ENCODE measurements at regions of chr2 and their contacts with region 1.

Region 1: DNA sequence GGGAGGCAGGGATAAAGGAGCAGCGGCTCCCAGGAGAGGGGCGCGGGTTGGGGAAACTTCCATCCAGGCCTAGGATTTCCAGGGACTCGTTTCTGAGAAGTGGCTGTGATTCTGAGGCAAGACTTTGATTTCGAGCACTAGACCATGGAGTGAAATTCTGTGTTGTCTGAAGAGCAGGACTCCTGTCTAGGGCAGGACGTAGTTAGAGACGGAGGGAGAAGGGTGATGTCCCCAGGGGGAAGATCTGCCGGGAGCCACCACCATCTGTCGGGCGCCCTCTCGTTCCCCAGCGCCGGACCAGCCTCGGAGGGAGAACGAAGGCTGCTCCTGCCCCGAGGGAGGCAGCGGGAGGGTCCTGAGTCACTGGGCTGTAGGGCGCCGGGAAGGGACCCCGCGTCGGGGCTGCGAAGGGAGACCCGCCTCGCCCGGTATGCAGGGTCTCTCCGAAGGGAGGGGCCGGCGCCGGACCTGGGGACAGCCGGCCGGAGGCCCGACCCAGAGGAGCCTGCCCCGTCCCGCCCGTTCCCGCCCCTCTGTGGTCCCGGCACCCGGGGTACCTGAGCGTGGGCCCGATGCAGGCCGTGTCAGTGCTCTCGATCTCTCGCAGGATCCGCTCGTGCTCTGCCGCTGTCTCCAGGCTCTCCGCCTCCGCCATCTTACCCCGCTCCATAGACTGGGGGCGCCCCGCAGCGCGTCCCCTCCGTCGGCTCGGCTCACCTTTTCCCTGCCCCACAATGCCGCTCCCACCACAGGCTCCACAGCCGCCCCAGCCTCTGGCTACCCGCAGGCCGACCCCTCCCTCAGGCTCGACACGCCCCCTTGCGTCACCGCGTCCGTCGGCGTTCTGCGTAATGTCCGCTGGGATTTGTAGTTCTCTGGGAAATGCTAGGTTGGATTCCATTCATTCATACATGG is at the start of gene EXOC6B:
- DNase-seq: peak; percentile 95
- H3K4me3 ChIP-seq: peak within 1 kb of the TSS; percentile 40 to 97 (median 75)
- H3K27ac ChIP-seq: peak within 1 kb of the TSS; percentile 58
- H3K4me1 ChIP-seq: peaks cover 16% of the 10 kb centered on the region
- H3K27me3 ChIP-seq: no peaks in the 10 kb centered on the region
- CTCF ChIP-seq: no peak
- POLR2A ChIP-seq: peak; percentile 80
- total RNA-seq, gene EXOC6B: 23.6 and 34.8 TPM in 2 replicates

Region 2: DNA sequence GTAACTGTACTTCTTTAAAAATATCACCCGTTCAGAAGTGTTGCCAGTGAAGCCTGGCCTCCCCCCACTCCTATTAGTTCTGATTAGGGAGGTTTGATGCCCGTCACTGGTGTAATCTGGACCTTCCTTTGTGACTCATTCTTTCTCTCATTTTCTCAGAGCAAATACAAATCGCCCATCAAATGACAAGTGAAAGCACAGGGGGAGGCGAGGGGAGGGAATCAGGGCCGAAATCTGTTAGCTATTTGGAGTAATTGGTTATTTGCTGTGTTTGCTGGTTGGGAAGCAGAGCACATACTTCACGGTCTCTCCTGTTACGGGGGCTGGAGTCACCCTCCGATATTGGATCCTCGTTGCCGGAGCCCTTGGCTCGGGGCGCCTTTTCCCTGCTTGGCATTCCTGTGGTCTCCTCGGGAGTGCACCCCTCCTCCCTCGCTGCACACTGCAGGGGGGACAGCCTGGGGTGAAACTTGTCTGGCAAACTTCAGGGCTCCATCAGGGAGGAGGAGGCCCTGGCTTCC is 1194.0 kb before region 1 on chr2:
- CTCF ChIA-PET with region 1: no interaction called
- POLR2A ChIA-PET with region 1: no interaction called
- dilution Hi-C with region 1: no loop called
- intact Hi-C with region 1: no loop called
- DNase-seq: no peak
- H3K4me3 ChIP-seq: no peak overlapping the region
- H3K27ac ChIP-seq: no peak overlapping the region
- H3K4me1 ChIP-seq: no peaks in the 10 kb centered on the region
- H3K27me3 ChIP-seq: no peaks in the 10 kb centered on the region
- CTCF ChIP-seq: no peak
- POLR2A ChIP-seq: no peak

Region 3: DNA sequence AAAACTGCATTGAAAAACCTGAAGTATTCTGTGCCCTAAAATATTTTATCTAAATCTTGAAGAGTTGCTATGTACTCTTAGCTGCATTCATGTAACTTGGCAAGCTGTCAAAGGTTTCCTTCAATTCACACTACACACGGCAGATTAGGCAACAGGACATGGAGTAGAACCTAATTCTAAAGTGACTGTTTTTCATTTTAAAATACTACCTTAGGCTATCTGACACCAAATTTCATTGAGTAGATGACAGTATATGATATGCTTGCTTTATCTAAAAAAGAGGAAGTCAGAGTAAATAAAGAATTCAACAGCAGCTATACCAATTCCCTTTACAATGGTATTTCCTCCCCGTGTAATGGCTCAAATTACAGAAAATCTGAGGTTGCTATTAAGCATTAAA is 45.0 kb before region 1 on chr2:
- CTCF ChIA-PET with region 1: interaction called, 5 read pairs
- POLR2A ChIA-PET with region 1: no interaction called
- dilution Hi-C with region 1: no loop called
- intact Hi-C with region 1: loop called (anchors 2 kb)
- DNase-seq: peak; percentile 84
- H3K4me3 ChIP-seq: no peak overlapping the region
- H3K27ac ChIP-seq: peak overlapping the region; percentile 5
- H3K4me1 ChIP-seq: peaks cover 38% of the 10 kb centered on the region
- H3K27me3 ChIP-seq: no peaks in the 10 kb centered on the region
- CTCF ChIP-seq: no peak
- POLR2A ChIP-seq: no peak

Region 4: DNA sequence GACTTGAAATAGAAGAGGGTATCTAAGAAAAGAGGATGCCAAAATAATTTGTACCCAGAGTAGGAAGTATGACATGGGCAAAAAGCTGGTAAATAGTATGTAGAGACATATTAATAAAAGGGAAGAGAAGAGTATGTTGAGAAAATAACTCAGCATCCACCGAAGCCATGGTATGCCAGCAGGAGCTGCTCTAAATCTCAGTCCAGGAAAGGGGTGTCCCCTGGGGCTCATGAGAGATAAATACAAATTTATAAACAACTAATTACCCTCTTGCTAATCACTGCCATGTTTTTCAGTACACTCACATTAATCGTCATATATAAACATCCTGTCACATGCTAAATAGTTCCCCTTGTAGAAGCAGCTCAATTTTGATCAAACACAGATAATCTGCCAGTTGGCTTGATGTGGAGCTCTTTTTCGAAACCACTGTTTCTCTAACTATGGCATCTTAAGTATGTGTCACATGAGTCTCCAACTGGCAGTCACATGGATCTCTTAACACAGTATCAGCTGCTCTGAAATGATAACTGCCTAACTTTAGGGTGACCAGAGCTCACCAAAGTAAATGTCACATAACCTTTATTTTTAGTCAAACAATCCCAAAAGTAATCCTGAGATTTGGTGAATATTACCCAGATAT is 31.6 kb before region 1 on chr2:
- CTCF ChIA-PET with region 1: interaction called, 6 read pairs
- POLR2A ChIA-PET with region 1: no interaction called
- dilution Hi-C with region 1: no loop called
- intact Hi-C with region 1: loop called (anchors 5 kb)
- DNase-seq: peak; percentile 21
- H3K4me3 ChIP-seq: no peak overlapping the region
- H3K27ac ChIP-seq: no peak overlapping the region
- H3K4me1 ChIP-seq: peaks cover 13% of the 10 kb centered on the region
- H3K27me3 ChIP-seq: no peaks in the 10 kb centered on the region
- CTCF ChIP-seq: no peak
- POLR2A ChIP-seq: no peak

Measured in endothelial cell of umbilical vein (primary cell).